ENCODE measurements at regions of chr20 and their contacts with region 1.

Region 1: DNA sequence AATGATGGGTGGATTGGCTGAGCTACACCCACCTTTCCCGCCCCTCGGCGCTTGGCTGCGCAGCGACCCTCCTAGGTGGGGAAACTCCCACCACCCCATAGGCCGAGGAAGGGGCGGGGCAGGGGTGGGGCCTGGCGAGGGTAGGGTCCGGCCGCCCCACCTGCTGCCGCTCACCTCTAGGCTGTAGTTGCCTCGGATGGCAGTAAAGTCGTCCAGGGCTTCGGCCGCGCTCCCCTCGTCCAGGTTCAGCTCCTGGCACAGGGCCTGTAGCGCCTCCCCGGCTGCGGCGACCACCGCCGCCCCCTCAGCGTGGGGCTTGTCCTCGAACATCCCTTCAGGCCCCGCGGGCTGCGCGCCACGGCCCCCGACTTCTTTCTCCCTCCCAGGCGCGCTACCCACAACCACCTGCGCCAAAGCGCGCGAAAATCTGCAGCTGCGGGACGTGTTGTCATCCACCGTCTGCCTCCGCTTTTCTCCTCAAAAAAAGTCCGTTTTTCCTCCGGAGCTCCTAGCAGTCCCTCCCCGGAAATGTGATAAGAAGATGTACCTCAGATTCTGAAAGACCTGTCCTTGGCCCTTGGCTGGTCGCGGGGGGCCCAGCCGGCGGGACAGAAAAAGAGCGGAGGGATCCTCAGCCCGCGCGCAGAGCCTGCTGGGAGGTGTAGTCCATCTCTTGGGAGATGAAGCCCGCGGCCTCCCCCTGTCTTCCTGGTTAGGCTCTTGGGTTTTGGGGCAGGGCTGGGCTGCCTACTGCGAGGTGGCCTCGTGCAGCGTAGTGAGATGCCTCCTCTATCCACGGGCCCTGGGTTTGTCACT is at the start of gene RBL1:
- DNase-seq: peak; percentile 96
- H3K4me3 ChIP-seq: peak within 1 kb of the TSS; percentile 58
- H3K27ac ChIP-seq: peak within 1 kb of the TSS; percentile 97
- H3K4me1 ChIP-seq: peaks cover 14% of the 10 kb centered on the region
- H3K27me3 ChIP-seq: no peaks in the 10 kb centered on the region
- CTCF ChIP-seq: peak; percentile 38; the same call in 1 of the 2 replicates
- total RNA-seq, gene RBL1: 28.8 and 30.2 TPM in 2 replicates

Region 2: GRCh38 chr20:36491901-36492617 is 603.7 kb before region 1 on chr20:
- CTCF ChIA-PET with region 1: no interaction called
- POLR2A ChIA-PET with region 1: interaction called, 10 read pairs
- intact Hi-C with region 1: no loop called
- DNase-seq: no peak
- H3K4me3 ChIP-seq: no peak overlapping the region
- H3K27ac ChIP-seq: no peak overlapping the region
- H3K4me1 ChIP-seq: no peaks in the 10 kb centered on the region
- H3K27me3 ChIP-seq: no peaks in the 10 kb centered on the region
- CTCF ChIP-seq: no peak

Region 3: GRCh38 chr20:37243937-37244571 is 148.2 kb after region 1 on chr20:
- CTCF ChIA-PET with region 1: no interaction called
- POLR2A ChIA-PET with region 1: no interaction called
- intact Hi-C with region 1: no loop called
- DNase-seq: no peak
- H3K4me3 ChIP-seq: no peak overlapping the region
- H3K27ac ChIP-seq: no peak overlapping the region
- H3K4me1 ChIP-seq: no peaks in the 10 kb centered on the region
- H3K27me3 ChIP-seq: no peaks in the 10 kb centered on the region
- CTCF ChIP-seq: no peak